Naive thymus-derived CD4-positive, alpha-beta T cell (primary cell): ENCODE measurements at regions of chr7 and their contacts with region 1.

Region 1: GRCh38 chr7:138886501-138886917 is 88.5 kb upstream of the ATP6V0A4 start:
- DNase-seq: peak in 7 of 9 donors; percentile 63 to 82 (median 78)
- ATAC-seq: peak; percentile 91
- H3K4me3 ChIP-seq: no peak overlapping the region
- H3K4me3 Mint-ChIP-seq: peak overlapping the region in 7 of 10 donors; percentile 41 to 67 (median 60)
- H3K27ac ChIP-seq: no peak overlapping the region
- H3K27ac Mint-ChIP-seq: peak overlapping the region; percentile 9 to 88 (median 61)
- H3K4me1 ChIP-seq: peaks cover 3 to 4% of the 10 kb centered on the region in 2 donors
- H3K4me1 Mint-ChIP-seq: peaks cover 3 to 32% (median 23%) of the 10 kb centered on the region in 7 donors
- H3K27me3 ChIP-seq: no peaks in the 10 kb centered on the region
- H3K27me3 Mint-ChIP-seq: peaks cover 0 to 13% (median 0%) of the 10 kb centered on the region in 5 donors

Region 2: DNA sequence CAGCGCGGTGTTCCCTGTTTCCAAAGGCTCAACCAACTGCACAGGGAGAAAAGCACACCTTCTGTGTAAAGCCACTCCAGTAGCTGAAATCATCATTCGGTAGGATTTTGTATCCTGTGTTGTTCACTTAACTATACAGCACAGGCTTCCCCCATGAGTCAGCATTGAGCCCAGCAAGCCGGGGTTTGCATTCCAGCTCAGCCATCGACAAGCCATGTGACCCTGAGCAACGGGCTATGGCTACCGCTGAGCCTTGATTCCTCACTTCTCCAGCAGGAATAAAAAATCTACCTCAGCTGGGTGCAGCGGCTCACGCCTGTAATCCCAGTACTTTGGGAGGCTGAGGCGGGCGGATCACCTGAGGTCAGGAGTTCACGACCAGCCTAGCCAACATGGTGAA is 44.4 kb before region 1 on chr7:
- CTCF ChIA-PET with region 1: no interaction called
- POLR2A ChIA-PET with region 1: no interaction called
- intact Hi-C with region 1: no loop called
- DNase-seq: no peak
- ATAC-seq: no peak
- H3K4me3 ChIP-seq: no peak overlapping the region
- H3K4me3 Mint-ChIP-seq: no peak overlapping the region
- H3K27ac ChIP-seq: no peak overlapping the region
- H3K27ac Mint-ChIP-seq: no peak overlapping the region
- H3K4me1 ChIP-seq: no peaks in the 10 kb centered on the region
- H3K4me1 Mint-ChIP-seq: no peaks in the 10 kb centered on the region
- H3K27me3 ChIP-seq: no peaks in the 10 kb centered on the region
- H3K27me3 Mint-ChIP-seq: peaks cover 0 to 14% (median 11%) of the 10 kb centered on the region in 5 donors

Region 3: DNA sequence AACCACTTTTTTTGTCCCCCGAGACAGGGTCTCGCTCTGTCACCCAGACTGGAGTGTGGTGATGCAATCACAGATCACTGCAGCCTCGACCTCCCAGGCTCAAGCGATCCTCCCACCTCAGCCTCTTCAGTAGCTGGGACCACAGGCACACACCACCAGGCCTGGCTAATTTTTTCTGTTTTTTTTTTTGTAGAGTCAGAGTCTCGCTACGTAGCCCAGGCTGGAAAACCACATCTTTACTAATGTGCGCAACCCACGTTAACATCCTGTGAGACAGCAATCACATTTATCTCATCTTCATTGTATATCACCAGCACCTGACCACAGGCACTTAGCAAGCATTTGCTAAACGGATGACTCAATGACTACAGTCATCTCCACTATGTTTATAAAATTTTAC is 10.7 kb before region 1 on chr7:
- CTCF ChIA-PET with region 1: interaction called, 10 read pairs
- POLR2A ChIA-PET with region 1: no interaction called
- intact Hi-C with region 1: loop called (anchors 1 kb)
- DNase-seq: peak in 8 of 9 donors; percentile 59 to 77 (median 67)
- ATAC-seq: peak; percentile 98
- H3K4me3 ChIP-seq: no peak overlapping the region
- H3K4me3 Mint-ChIP-seq: peak overlapping the region in 2 of 10 donors; percentile 20 to 29
- H3K27ac ChIP-seq: no peak overlapping the region
- H3K27ac Mint-ChIP-seq: peak overlapping the region in 8 of 9 donors; percentile 16 to 61 (median 48)
- H3K4me1 ChIP-seq: no peaks in the 10 kb centered on the region
- H3K4me1 Mint-ChIP-seq: peaks cover 9 to 23% (median 12%) of the 10 kb centered on the region in 7 donors
- H3K27me3 ChIP-seq: no peaks in the 10 kb centered on the region
- H3K27me3 Mint-ChIP-seq: peaks cover 0 to 9% (median 0%) of the 10 kb centered on the region in 5 donors

Region 4: DNA sequence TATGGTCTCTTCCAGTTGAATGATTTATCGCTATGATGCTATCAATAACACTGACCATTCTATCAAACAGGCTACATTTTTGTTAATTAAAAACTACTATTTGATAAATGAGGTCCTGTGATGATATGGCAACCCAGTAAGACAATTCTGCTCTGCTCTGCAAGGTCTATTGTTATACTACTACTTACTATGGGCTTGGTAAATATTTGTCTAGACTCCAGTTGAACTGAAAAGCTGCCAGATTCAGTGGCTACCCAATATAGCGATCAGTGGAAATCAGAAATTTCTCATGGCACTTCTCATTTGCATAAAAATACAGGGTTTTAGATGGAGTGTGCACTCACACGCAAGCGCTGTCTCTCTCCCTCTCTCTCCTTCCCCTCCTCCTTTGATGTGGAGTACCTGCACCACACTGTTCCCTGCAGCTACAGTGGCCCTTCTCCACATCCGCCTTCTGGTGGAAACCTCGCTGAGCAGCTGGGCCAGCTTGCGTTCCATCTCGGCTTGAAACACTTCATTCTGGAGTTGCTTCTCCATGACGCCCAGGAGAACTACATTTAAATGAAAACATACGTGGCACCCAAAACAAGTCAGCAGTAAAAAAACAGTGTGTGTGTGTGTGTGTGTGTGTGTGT is 16.8 kb after region 1 on chr7:
- CTCF ChIA-PET with region 1: interaction called, 24 read pairs
- POLR2A ChIA-PET with region 1: interaction called, 7 read pairs
- intact Hi-C with region 1: loop called (anchors 1 kb)
- DNase-seq: peak; percentile 29 to 94 (median 90)
- ATAC-seq: peak; percentile 98
- H3K4me3 ChIP-seq: peak overlapping the region; percentile 38
- H3K4me3 Mint-ChIP-seq: peak overlapping the region; percentile 69 to 94 (median 82)
- H3K27ac ChIP-seq: no peak overlapping the region
- H3K27ac Mint-ChIP-seq: peak overlapping the region; percentile 17 to 97 (median 87)
- H3K4me1 ChIP-seq: peaks cover 20 to 36% of the 10 kb centered on the region in 2 donors
- H3K4me1 Mint-ChIP-seq: peaks cover 25 to 66% (median 56%) of the 10 kb centered on the region in 7 donors
- H3K27me3 ChIP-seq: no peaks in the 10 kb centered on the region
- H3K27me3 Mint-ChIP-seq: peaks cover 0 to 59% (median 5%) of the 10 kb centered on the region in 5 donors

Region 5: GRCh38 chr7:139016931-139017511 is 130.5 kb after region 1 on chr7:
- CTCF ChIA-PET with region 1: interaction called, 11 read pairs
- POLR2A ChIA-PET with region 1: interaction called, 3 read pairs
- intact Hi-C with region 1: loop called (anchors 1 kb)
- DNase-seq: peak; percentile 17 to 76 (median 52)
- ATAC-seq: peak; percentile 94
- H3K4me3 ChIP-seq: no peak overlapping the region
- H3K4me3 Mint-ChIP-seq: no peak overlapping the region
- H3K27ac ChIP-seq: no peak overlapping the region
- H3K27ac Mint-ChIP-seq: peak overlapping the region in 1 of 9 donors; percentile 52
- H3K4me1 ChIP-seq: no peaks in the 10 kb centered on the region
- H3K4me1 Mint-ChIP-seq: peaks cover 0 to 10% (median 6%) of the 10 kb centered on the region in 7 donors
- H3K27me3 ChIP-seq: no peaks in the 10 kb centered on the region
- H3K27me3 Mint-ChIP-seq: peaks cover 0 to 16% (median 5%) of the 10 kb centered on the region in 5 donors

Region 6: GRCh38 chr7:139043823-139044812 is 157.6 kb after region 1 on chr7:
- CTCF ChIA-PET with region 1: interaction called, 8 read pairs
- POLR2A ChIA-PET with region 1: no interaction called
- intact Hi-C with region 1: loop called (anchors 5 to 10 kb)
- DNase-seq: peak in 5 of 9 donors; percentile 36 to 71 (median 40)
- ATAC-seq: peak; percentile 81
- H3K4me3 ChIP-seq: no peak overlapping the region
- H3K4me3 Mint-ChIP-seq: peak overlapping the region in 9 of 10 donors; percentile 4 to 87 (median 58)
- H3K27ac ChIP-seq: peak overlapping the region; percentile 50
- H3K27ac Mint-ChIP-seq: peak overlapping the region; percentile 48 to 89 (median 79)
- H3K4me1 ChIP-seq: peaks cover 36 to 38% of the 10 kb centered on the region in 2 donors
- H3K4me1 Mint-ChIP-seq: peaks cover 35 to 77% (median 67%) of the 10 kb centered on the region in 7 donors
- H3K27me3 ChIP-seq: no peaks in the 10 kb centered on the region
- H3K27me3 Mint-ChIP-seq: no peaks in the 10 kb centered on the region